WTC11 (cell line): ENCODE measurements at regions of chr19 and their contacts with region 1.

Region 1: GRCh38 chr19:38929929-38930775 is at the start of gene SARS2:
- DNase-seq: peak; percentile 94
- ATAC-seq: peak; percentile 55
- H3K4me3 Mint-ChIP-seq: peak within 1 kb of the TSS; percentile 82
- H3K27ac Mint-ChIP-seq: peak within 1 kb of the TSS; percentile 98
- H3K4me1 Mint-ChIP-seq: peaks cover 10% of the 10 kb centered on the region
- H3K27me3 Mint-ChIP-seq: peaks cover 4% of the 10 kb centered on the region; the same call in 1 of the 2 replicates
- CTCF ChIP-seq: peak; percentile 86; the same call in 1 of the 2 replicates
- total RNA-seq, gene SARS2: 66.4 to 74.7 TPM (median 69.6 TPM) in 3 replicates

Region 2: GRCh38 chr19:38769635-38770211 is 160.4 kb before region 1 on chr19:
- CTCF ChIA-PET with region 1: interaction called, 11 read pairs
- POLR2A ChIA-PET with region 1: no interaction called
- DNase-seq: peak; percentile 92
- ATAC-seq: peak; percentile 72
- H3K4me3 Mint-ChIP-seq: peak overlapping the region; percentile 44
- H3K27ac Mint-ChIP-seq: no peak overlapping the region
- H3K4me1 Mint-ChIP-seq: peaks cover 4% of the 10 kb centered on the region
- H3K27me3 Mint-ChIP-seq: peaks cover 9% of the 10 kb centered on the region
- CTCF ChIP-seq: peak; percentile 86

Region 3: DNA sequence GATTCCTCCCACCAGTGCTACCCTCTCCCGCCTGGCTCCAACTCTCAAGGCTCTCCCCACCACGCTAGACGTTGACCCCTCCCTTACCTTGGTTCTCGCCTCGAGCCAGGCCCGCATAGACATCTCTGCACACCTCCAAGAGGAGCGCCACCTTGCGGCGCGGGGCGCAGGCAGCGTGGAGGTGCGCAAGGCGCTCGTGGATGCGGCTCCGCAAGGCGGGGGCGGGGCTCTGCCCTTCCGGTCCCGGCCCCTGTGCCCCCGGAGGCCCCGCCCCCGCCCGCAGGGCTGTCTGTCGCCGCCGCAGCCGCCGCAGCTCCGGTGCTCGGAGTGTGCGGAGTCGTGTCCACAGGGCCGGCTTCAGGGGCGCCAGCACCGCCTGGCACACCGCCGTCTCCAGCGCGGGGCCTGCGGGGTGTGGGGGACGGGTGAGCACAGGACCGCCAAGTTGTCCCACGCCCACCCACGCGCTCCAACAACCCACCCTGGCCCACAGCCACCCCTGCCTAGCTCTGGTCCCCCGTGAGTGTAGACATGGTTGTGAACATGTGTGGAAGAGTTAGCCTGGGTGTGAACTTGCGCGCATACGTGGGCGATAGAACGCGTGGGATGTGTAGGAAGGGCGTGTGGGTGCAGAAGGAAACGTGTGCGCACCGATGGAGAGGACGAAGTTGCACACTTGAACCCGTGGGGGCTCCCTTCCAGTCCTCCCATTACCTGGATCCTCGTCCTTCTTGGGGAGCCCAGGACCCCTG is 60.1 kb before region 1 on chr19:
- CTCF ChIA-PET with region 1: interaction called, 17 read pairs
- POLR2A ChIA-PET with region 1: no interaction called
- DNase-seq: peak; percentile 89
- ATAC-seq: peak; percentile 78
- H3K4me3 Mint-ChIP-seq: peak overlapping the region; percentile 79
- H3K27ac Mint-ChIP-seq: no peak overlapping the region
- H3K4me1 Mint-ChIP-seq: peaks cover 7% of the 10 kb centered on the region
- H3K27me3 Mint-ChIP-seq: peaks cover 21% of the 10 kb centered on the region
- CTCF ChIP-seq: peak; percentile 50

Region 4: GRCh38 chr19:38899447-38900219 is 30.5 kb before region 1 on chr19 and contains the starts of genes NFKBIB and SIRT2:
- CTCF ChIA-PET with region 1: interaction called, 32 read pairs
- POLR2A ChIA-PET with region 1: no interaction called
- DNase-seq: peak; percentile 99
- ATAC-seq: peak; percentile 97
- H3K4me3 Mint-ChIP-seq: peak within 1 kb of the TSS; percentile 87
- H3K27ac Mint-ChIP-seq: peak within 1 kb of the TSS; percentile 94
- H3K4me1 Mint-ChIP-seq: peaks cover 12% of the 10 kb centered on the region
- H3K27me3 Mint-ChIP-seq: peaks cover 24% of the 10 kb centered on the region
- CTCF ChIP-seq: no peak
- total RNA-seq, gene NFKBIB: 29.6 to 39.8 TPM (median 30.6 TPM) in 3 replicates
- total RNA-seq, gene SIRT2: 9.5 to 10.7 TPM (median 10.2 TPM) in 3 replicates

Region 5: DNA sequence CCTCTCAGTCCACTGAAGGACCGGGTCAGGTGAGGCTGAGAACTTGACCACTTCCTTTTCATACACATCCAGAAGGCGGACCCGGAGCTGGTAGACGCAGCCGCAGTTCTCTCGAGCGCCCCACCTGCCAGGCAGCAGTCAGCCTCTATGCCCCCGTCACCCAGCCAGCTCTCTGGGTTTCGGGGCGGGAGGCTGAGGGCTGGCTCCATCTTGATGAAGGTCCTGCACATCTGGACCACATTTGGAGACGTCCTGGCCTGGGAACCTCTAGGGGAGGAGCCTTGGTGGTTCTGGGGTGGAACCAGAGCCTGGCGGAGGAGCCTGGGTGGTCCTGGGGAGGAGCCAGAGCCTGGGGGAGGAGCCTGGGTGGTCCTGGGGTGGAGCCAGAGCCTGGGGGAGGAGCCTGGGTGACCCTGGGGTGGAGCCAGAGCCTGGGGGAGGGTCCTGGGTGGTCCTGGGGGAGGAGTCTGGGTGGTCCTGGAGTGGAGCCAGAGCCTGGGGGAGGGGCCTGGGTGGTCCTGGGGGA is 14.9 kb after region 1 on chr19:
- CTCF ChIA-PET with region 1: interaction called, 13 read pairs
- POLR2A ChIA-PET with region 1: no interaction called
- DNase-seq: peak; percentile 29
- ATAC-seq: no peak
- H3K4me3 Mint-ChIP-seq: no peak overlapping the region
- H3K27ac Mint-ChIP-seq: no peak overlapping the region
- H3K4me1 Mint-ChIP-seq: peaks cover 2% of the 10 kb centered on the region
- H3K27me3 Mint-ChIP-seq: peaks cover 20% of the 10 kb centered on the region
- CTCF ChIP-seq: no peak

Region 6: GRCh38 chr19:39156326-39157230 is 226.4 kb after region 1 on chr19:
- CTCF ChIA-PET with region 1: no interaction called
- POLR2A ChIA-PET with region 1: no interaction called
- DNase-seq: no peak
- ATAC-seq: no peak
- H3K4me3 Mint-ChIP-seq: no peak overlapping the region
- H3K27ac Mint-ChIP-seq: no peak overlapping the region
- H3K4me1 Mint-ChIP-seq: peaks cover 40% of the 10 kb centered on the region
- H3K27me3 Mint-ChIP-seq: no peaks in the 10 kb centered on the region; the same call in 1 of the 2 replicates
- CTCF ChIP-seq: no peak